Pancreas (tissue), 10 donors: ENCODE measurements at regions of chr12 and their contacts with region 1.

Region 1: GRCh38 chr12:100545092-100545491 is 28.4 kb upstream of the GAS2L3 start:
- DNase-seq: no peak
- ATAC-seq: no peak
- H3K4me3 ChIP-seq: no peak overlapping the region
- H3K27ac ChIP-seq: no peak overlapping the region
- H3K4me1 ChIP-seq: no peaks in the 10 kb centered on the region
- H3K27me3 ChIP-seq: no peaks in the 10 kb centered on the region
- CTCF ChIP-seq: no peak

Region 2: DNA sequence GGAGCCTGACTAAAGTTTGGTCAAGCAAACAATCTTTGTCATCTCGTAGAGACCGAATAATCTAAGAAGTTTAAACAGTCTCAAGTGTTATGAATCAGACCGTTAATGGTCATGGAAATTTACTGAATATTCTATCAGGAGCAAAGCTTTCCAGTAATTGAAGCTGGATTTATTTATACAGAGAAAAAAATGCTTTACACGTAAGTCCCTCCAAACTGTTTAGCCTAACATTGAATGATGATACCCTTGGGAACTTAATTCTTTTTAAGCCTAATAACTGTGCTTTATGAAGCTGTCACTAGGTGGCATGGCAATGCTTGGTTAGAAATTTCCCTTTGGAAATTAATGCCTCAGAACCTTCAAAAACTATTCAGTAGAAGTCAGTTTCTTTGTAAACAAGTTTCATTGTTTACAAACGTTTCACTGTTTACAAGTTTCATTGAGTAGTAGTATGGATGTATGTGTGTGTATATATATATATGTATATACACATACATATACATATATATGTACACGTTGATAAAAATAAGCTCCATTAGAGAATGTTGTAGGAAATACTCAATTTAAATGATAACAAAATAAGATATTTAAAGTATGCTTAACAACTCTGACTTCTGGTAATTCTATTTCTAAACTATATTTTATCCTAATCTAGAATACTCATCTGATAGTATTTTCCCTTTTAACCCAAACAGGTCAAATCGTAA is 310.3 kb before region 1 on chr12:
- intact Hi-C with region 1: loop called in 2 of 3 experiments (anchors 10 kb)
- DNase-seq: no peak
- ATAC-seq: peak in 3 of 4 donors; percentile 80 to 88 (median 86)
- H3K4me3 ChIP-seq: no peak overlapping the region
- H3K27ac ChIP-seq: no peak overlapping the region
- H3K4me1 ChIP-seq: no peaks in the 10 kb centered on the region
- H3K27me3 ChIP-seq: no peaks in the 10 kb centered on the region
- CTCF ChIP-seq: peak in 3 of 4 donors; percentile 54 to 69 (median 63)

Region 3: DNA sequence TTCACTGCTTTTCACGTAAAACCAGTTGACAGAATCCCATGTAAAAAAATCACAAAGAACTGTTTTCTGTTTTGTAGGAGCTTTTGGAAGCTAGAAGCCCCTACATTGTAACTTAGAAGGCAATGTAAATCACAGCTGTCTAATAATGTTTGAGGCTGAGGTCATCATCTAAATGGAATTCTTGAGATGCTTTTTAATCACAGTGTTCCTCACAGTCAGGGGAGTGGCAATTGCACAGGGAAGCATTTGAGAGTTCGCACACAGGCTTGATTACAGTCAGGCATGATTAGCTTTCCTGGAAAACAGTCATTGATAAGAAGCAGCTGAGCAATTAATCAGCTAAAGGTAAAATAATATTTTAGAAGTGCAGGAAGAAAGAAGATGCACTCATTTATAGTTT is 185.3 kb before region 1 on chr12:
- intact Hi-C with region 1: loop called in 1 of 3 experiments (anchors 10 kb)
- DNase-seq: no peak
- ATAC-seq: peak in 3 of 4 donors; percentile 57 to 73 (median 69)
- H3K4me3 ChIP-seq: no peak overlapping the region
- H3K27ac ChIP-seq: no peak overlapping the region
- H3K4me1 ChIP-seq: peaks cover 0 to 14% (median 6%) of the 10 kb centered on the region in 3 donors
- H3K27me3 ChIP-seq: no peaks in the 10 kb centered on the region
- CTCF ChIP-seq: no peak